Cardiac septum (tissue), 1 donor: ENCODE measurements at regions of chr22 and their contacts with region 1.

Region 1: DNA sequence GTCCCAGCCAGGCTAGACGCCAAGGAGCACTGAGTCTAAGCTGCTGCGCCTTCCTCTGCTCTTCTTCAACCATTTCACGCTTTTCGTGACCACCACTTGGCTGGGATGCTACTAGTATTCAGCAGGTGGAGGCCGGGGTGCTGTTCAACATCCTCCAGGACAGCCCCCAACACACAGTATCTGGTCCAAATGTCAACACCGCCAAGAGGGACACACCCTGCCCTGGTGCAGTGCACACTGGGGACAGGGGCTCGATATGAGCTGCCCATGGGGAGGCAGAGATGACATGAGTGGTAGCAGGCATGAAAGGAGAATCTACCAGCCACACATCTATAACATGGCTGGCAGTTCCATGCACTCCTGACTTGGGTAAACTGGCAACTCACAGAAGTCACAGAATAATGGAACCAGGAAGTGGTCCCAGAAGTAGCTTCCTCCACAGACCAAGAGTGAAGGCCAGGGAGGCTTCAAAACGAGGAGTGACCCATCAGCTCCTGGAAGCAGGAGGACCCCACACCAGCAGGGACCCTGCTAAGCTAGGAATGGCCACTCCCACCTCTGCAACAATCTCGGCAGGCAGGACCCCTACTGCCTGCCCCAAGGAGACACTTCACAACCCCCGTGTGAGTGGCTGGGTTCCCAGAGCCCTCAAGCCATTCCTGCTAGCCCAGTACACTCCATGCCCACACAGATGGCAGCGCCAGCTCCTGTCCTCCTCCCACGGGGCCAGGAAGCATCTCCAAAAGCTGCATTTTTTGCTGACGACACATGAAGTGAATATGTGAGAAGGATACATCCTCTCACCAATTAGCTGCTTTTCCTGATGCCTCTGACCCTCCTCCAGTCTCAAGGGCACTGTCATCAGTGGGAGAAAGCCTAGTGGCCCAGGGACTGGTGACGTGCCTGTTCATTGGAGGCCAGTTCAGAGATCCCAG is 78.8 kb downstream of the DGCR2 start:
- DNase-seq: no peak

Region 2: DNA sequence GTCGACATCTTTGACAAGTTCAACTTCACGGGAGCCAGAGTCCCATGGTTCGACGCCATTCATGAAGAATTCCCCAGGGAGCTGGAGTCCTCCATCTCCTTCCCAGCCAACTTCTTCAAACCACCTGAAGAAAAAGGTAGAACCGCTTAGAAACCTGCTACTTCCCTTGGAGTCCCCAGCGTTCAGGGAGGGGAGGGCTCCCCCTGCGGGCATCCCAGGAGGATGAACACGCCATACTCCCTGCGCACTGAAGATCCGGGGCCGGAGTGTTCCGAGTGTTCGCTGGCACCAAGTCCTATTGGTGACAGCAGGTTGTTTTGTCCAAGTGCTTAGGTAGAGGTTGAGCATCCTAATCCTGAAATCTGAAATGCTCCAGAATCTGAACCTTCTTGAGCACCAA is 55.6 kb before region 1 on chr22:
- intact Hi-C with region 1: loop called (anchors 10 kb)
- DNase-seq: no peak

Region 3: GRCh38 chr22:18997925-18998315 is 45.5 kb before region 1 on chr22:
- intact Hi-C with region 1: no loop called
- DNase-seq: no peak